KBM-7 (cell line): ENCODE measurements at regions of chr10 and their contacts with region 1.

Region 1: DNA sequence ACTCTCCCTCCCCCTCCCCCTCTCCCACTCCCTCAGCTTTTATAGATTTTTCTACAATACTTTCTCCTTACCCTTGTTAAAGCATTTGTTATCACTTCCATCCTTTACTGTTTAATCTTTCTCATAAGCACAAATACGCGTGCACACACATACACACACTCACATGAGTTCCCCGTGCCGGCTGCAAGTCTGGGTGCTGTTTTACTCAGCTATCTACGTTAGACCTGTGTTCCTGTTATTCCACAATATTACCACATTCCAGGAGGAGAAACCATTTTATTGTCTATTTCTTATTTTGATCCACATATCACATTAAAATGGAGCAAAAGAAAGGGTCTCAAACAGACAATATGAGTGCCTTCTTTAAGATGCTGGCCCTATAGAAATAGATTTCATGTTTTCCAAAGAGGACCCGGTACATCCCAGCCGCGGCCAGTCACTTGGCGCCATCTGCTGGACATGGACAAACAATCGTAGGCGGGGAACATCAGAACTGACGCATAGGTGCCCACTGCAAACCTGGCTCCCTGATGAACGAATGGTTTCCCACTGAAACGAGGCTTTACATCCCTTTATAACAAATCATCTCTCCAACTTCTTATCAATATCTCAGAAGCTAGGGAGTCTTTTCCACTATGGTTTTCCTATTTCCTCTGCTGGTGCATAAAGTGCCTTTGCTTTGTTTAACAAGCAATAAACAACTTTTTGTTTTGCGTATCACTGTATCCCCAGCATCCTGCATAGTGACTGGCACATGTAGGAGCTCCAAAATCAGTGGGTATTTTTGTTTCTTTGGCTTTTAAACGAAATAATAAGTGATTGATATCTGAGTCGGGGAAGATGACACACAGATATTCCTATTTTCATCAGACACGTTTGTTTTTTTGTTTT is 25.2 kb upstream of the OPTN start:
- DNase-seq: peak; percentile 72

Region 2: GRCh38 chr10:12710594-12711349 is 364.0 kb before region 1 on chr10:
- in situ Hi-C with region 1: loop called (anchors 25 kb)
- DNase-seq: peak; percentile 89